Activated CD4-positive, alpha-beta memory T cell treated with anti-CD3 and anti-CD28 coated beads for 36 hours (primary cell): ENCODE measurements at regions of chr1 and their contacts with region 1.

Region 1: DNA sequence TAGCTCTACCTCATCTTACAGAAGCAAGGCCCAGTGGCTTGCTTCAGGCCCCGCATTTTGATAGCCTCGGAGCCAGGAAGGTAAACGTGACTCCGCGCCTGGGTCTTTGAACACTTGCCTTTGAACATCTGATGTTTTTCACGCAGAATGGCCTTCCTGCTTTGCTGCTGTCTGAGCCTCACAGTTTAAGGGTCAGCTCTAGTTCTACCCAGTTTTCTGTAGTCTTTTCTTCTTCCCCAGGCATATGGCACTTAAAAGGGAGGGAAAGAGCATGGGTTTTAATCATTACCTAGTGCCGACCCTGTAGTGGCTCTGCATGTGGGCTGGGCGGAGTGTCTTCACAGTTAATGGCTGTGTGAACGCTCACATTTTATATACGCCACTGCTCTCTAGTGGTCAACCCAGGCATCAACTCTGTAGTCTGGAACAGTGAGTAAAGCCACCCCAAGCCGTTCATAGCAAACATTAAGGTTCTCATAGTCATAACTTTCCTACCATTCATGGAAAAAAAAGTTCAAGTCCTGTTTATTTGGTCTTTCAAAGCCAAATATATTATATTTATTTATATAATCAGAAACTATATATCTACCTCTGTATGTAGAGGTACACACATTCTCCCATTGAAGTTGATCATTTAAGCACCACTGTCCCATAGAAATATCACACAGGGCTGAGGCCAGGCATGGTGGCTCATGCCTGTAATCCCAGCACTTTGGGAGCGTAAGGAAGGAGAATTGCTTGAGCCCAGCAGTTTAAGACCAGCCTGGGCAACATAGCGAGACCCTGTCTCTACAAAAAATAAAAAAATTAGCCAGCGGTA is 78.1 kb downstream of the IER5 start:
- DNase-seq: peak; percentile 80
- H3K4me3 Mint-ChIP-seq: no peak overlapping the region
- H3K27ac Mint-ChIP-seq: no peak overlapping the region
- H3K4me1 Mint-ChIP-seq: peaks cover 3% of the 10 kb centered on the region
- H3K27me3 Mint-ChIP-seq: no peaks in the 10 kb centered on the region

Region 2: GRCh38 chr1:180515864-180516388 is 650.7 kb before region 1 on chr1:
- CTCF ChIA-PET with region 1: interaction called, 16 read pairs
- POLR2A ChIA-PET with region 1: no interaction called
- intact Hi-C with region 1: loop called (anchors 5 kb)
- DNase-seq: peak; percentile 66
- H3K4me3 Mint-ChIP-seq: no peak overlapping the region
- H3K27ac Mint-ChIP-seq: no peak overlapping the region
- H3K4me1 Mint-ChIP-seq: no peaks in the 10 kb centered on the region
- H3K27me3 Mint-ChIP-seq: peaks cover 5% of the 10 kb centered on the region

Region 3: DNA sequence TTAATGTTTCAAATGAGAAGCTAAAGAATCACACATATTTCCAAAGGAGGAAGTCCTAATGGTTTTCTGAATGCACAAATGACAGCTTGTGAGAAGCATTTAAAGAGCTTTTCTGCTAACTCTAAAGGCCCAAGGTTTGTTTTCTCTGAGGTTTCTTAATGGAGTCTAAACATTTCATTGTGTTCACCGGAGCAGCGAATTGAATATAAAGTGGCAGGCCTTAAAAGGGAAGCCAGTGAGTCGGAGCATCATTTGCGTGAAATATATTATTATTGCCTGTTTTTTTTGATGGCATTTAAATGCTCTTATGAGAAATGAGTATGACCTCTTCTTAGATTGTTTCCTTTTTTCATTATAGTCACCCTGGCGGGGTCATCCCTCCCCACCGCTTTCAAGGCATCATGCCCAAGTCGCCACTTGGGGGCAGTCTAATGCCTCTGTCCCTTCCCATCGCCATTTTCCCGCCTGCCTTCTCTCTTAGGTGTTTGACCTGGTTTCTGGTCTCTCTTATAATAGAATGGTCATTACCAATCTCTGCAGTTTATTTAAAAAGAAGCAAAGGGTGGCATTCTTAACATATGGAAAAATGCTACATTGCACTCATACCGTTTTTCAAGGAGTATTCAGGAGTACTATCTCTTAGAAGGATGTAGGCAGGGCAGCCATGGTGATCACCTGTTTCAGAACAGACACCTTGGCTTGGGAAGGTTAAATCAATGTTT is 633.2 kb before region 1 on chr1:
- CTCF ChIA-PET with region 1: interaction called, 6 read pairs
- POLR2A ChIA-PET with region 1: interaction called, 4 read pairs
- intact Hi-C with region 1: loop called (anchors 5 kb)
- DNase-seq: peak; percentile 81
- H3K4me3 Mint-ChIP-seq: no peak overlapping the region
- H3K27ac Mint-ChIP-seq: no peak overlapping the region
- H3K4me1 Mint-ChIP-seq: no peaks in the 10 kb centered on the region
- H3K27me3 Mint-ChIP-seq: peaks cover 8% of the 10 kb centered on the region

Region 4: DNA sequence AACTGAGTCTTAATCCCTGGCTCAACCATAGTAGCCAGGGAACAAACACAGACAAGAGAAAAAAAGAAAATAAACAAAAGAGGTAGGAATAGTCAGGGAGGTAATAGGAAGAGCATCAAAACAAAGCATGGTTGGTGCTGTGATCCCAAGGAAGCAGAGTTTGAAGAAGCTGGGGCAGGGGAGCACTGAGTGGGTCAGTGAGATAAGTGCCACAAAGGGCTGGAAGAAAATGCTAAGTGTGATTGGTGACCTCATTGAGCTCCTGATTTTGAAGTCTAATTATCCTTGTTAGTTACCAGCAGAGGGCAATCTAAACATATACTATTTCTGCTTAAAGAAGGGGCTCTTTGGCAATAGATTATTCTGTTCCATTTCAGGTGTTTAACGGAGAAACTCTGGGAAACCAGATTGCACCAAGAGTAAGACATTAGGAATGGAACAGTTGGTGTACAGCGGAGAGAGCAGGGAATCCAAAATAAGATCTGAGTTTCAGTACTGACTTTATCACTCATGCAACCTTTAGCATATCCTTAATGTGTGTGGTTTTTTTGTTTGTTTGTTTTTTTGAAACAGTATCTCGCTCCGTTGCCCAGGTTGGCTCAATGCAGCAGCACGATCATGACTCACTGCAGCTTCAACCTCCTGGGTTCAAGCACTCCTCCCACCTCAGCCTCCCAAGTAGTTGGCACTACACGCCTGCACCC is 284.6 kb before region 1 on chr1:
- CTCF ChIA-PET with region 1: interaction called, 25 read pairs
- POLR2A ChIA-PET with region 1: no interaction called
- intact Hi-C with region 1: loop called (anchors 1 kb)
- DNase-seq: no peak
- H3K4me3 Mint-ChIP-seq: no peak overlapping the region
- H3K27ac Mint-ChIP-seq: no peak overlapping the region
- H3K4me1 Mint-ChIP-seq: no peaks in the 10 kb centered on the region
- H3K27me3 Mint-ChIP-seq: no peaks in the 10 kb centered on the region

Region 5: GRCh38 chr1:181126938-181127587 is 39.5 kb before region 1 on chr1:
- CTCF ChIA-PET with region 1: no interaction called
- POLR2A ChIA-PET with region 1: no interaction called
- intact Hi-C with region 1: no loop called
- DNase-seq: no peak
- H3K4me3 Mint-ChIP-seq: no peak overlapping the region
- H3K27ac Mint-ChIP-seq: no peak overlapping the region
- H3K4me1 Mint-ChIP-seq: peaks cover 7% of the 10 kb centered on the region
- H3K27me3 Mint-ChIP-seq: no peaks in the 10 kb centered on the region

Region 6: GRCh38 chr1:181424786-181425403 is 258.3 kb after region 1 on chr1:
- CTCF ChIA-PET with region 1: no interaction called
- POLR2A ChIA-PET with region 1: no interaction called
- intact Hi-C with region 1: no loop called
- DNase-seq: peak; percentile 84
- H3K4me3 Mint-ChIP-seq: peak overlapping the region; percentile 41
- H3K27ac Mint-ChIP-seq: no peak overlapping the region
- H3K4me1 Mint-ChIP-seq: peaks cover 12% of the 10 kb centered on the region
- H3K27me3 Mint-ChIP-seq: peaks cover 8% of the 10 kb centered on the region

Region 7: GRCh38 chr1:181655761-181656160 is 489.2 kb after region 1 on chr1:
- CTCF ChIA-PET with region 1: no interaction called
- POLR2A ChIA-PET with region 1: no interaction called
- intact Hi-C with region 1: no loop called
- DNase-seq: no peak
- H3K4me3 Mint-ChIP-seq: no peak overlapping the region
- H3K27ac Mint-ChIP-seq: no peak overlapping the region
- H3K4me1 Mint-ChIP-seq: no peaks in the 10 kb centered on the region
- H3K27me3 Mint-ChIP-seq: peaks cover 15% of the 10 kb centered on the region